Head of caudate nucleus (tissue), 42 donors: ENCODE measurements at regions of chr2 and their contacts with region 1.

Region 1: DNA sequence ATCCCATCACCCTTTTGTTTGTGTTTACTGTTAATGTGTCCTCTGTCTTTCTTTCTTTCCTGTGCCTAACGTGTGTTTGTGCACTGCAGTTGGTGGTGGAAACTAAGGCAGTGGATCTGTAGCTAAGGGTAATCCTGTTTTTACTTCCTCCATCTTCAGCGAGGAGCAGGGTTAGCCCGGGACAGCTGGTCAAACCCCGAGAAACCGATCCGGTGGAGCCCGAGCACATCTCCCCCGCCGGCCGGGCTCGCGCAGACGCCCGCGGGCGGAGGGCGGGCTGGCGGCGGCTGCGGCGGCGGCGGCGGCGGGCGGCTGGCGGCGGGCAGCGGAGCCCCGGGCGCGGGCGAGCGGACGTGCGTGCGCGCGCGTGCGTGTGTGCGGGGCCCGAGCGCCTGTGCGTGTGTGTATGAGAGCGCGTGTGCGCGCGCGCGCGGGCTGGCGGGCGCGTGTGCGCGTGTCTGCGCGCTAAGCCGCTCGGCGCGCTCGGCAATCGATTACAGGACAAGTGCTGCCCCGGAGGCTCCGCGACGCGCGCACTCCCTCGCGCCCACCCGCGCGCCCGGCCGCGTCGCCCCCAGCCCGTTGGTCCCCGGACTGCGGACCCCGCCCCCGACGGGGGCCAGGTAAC is at the start of gene IKZF2:
- DNase-seq: peak; percentile 69 to 93 (median 85)

Region 2: DNA sequence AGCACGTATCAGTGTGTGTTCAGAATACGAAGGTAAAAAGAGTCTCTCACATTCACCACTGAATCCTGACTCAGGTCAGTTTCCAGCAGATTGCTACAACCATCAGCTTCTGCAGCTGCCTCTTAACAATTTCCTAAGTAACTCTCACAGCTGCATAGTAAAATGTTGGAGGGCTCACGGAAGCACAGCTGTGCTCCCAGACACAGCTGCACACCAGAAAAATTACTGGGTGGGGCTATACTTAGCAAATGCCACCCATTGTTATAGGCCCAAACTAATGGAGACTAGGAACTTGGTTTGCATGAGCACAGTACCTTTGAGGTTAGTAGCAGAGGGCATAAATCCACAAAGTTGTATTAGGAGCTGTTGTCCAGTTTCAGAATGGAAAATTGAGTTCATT is 459.1 kb before region 1 on chr2:
- intact Hi-C with region 1: loop called (anchors 5 kb)
- DNase-seq: no peak

Region 3: GRCh38 chr2:212777020-212777491 is 374.5 kb before region 1 on chr2:
- intact Hi-C with region 1: loop called (anchors 5 kb)
- DNase-seq: peak in 1 of 42 donors; percentile 1

Region 4: GRCh38 chr2:213189001-213189899 is 37.7 kb after region 1 on chr2:
- intact Hi-C with region 1: no loop called
- DNase-seq: peak in 19 of 42 donors; percentile 3 to 50 (median 11)